Panc1 (cell line): ENCODE measurements at regions of chr11 and their contacts with region 1.

Region 1: DNA sequence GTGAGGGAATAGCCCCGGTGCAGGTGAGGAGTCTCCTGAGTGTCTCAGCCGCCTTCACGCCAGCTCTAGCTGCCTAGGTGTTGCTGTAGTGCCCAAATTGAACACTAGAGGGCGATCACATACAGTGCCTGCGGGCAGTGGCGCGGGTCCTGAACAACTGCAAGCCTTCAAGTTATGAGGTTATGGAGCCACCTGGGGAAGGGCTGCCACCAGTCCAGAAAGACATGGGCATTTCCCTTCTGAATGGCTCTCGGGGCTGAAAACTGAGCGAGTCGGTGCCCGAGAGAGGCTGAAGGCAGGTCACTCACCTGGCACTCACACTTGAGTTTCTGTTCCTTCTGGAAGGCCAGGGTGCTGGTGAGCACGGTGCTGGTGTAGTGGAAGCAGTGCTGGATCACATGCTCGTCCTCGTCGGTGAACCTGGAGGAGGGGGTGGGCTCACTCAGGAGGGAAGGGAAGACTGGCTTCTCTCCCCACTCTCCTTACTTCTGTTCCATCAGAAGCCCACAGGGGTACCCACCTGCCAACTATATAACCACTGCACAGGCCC is 88.4 kb downstream of the PDE2A start:
- DNase-seq: no peak
- ATAC-seq: peak; percentile 81
- H3K4me3 ChIP-seq: peak overlapping the region in 1 of 2 experiments; percentile 3; a peak in 1 of 4 replicates
- H3K27ac ChIP-seq: no peak overlapping the region
- H3K4me1 ChIP-seq: no peaks in the 10 kb centered on the region
- H3K27me3 ChIP-seq: peaks cover 12% of the 10 kb centered on the region
- CTCF ChIP-seq: peak; percentile 99

Region 2: DNA sequence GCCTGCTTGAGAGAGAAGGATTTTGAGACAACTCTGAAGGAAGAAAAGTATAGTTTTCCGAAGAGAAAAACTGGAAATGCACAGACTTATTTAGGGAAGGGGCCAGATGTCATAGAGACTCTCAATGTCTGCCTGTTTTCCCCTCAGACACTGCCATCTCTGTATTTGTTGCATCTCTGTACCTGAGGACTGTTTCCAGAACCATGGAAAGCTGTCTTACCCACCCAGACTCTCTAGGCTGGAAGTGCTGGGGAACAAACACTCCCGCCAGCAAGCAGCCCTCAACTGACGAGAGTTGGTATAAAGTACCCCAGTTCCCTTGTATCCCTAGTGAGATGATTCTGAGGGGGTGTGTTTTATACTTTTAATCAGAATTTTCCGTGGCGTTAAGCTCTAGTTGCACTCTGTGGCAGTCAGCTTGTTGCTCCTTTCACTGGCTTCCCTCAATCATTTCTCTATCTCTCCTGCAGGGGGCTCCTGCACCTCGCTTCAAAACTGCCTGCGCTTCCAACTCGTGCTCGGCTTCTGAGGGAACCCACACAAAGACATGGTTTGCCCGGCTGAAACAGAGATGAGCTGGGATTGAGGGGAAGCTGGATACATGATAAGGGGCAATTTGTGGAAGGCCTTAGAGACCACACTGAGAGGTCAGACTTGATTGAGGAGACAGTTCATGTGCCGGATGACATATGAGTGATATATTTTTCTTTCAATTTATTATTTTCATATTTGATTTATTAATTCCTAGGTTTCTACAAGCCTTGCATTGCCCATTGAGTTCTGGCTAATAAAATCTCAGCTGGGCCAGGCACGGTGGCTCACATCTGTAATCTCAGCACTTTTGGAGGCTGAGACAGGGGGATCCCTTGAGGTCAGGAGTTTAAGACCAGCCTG is 114.6 kb before region 1 on chr11:
- CTCF ChIA-PET with region 1: interaction called, 14 read pairs
- POLR2A ChIA-PET with region 1: interaction called, 3 read pairs
- in situ Hi-C with region 1: no loop called
- intact Hi-C with region 1: no loop called
- DNase-seq: no peak
- ATAC-seq: peak; percentile 97
- H3K4me3 ChIP-seq: peak overlapping the region in 1 of 2 experiments; percentile 21; a peak in 2 of 4 replicates
- H3K27ac ChIP-seq: no peak overlapping the region
- H3K4me1 ChIP-seq: peaks cover 7% of the 10 kb centered on the region; the same call in 1 of the 2 replicates
- H3K27me3 ChIP-seq: peaks cover 43% of the 10 kb centered on the region
- CTCF ChIP-seq: peak; percentile 98

Region 3: DNA sequence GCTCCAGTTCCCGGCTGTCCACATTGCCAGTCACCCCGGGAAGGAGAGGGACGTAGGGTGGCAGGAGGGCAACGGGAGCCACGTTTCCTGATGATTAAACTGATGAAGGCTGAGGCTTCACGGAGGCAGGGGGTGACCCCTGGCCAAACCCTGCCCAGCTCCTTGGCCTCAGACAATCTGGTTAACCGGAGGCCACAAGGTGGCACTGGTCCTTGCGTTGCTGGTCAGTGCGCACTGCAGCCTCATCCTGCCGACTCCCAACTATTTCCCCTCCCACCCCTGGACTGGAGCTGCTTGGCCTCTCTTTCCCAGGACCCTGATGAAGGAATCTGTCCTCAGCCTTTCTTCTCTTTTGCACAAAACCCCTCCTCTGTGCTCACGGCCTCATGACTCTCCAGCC is 13.1 kb after region 1 on chr11:
- CTCF ChIA-PET with region 1: interaction called, 13 read pairs
- POLR2A ChIA-PET with region 1: no interaction called
- in situ Hi-C with region 1: no loop called
- intact Hi-C with region 1: no loop called
- DNase-seq: no peak
- ATAC-seq: peak; percentile 89
- H3K4me3 ChIP-seq: no peak overlapping the region
- H3K27ac ChIP-seq: no peak overlapping the region
- H3K4me1 ChIP-seq: no peaks in the 10 kb centered on the region
- H3K27me3 ChIP-seq: no peaks in the 10 kb centered on the region
- CTCF ChIP-seq: peak; percentile 87

Region 4: DNA sequence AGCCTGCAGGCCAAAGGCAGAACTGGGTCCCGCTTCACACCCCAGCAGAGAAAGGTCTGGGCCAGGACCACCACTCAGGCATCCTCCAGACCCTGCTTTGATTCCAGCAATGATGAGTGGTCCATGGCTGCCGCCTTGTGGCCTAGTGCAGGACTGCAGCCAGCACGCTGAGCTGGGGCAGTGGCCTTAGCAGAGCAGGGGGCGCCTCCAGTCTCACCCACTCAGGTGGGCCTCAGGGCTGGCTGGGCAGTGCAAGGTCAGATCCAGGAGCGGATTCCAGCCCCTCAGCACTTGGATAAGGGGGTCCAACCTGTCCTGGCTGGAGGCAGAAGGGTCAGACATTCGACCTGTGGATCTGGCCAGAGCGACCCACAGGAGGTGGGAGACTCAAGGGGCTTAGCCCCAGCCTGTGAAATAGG is 98.0 kb after region 1 on chr11:
- CTCF ChIA-PET with region 1: interaction called, 24 read pairs
- POLR2A ChIA-PET with region 1: no interaction called
- in situ Hi-C with region 1: no loop called
- intact Hi-C with region 1: loop called (anchors 5 kb)
- DNase-seq: peak; percentile 52
- ATAC-seq: peak; percentile 73
- H3K4me3 ChIP-seq: no peak overlapping the region
- H3K27ac ChIP-seq: no peak overlapping the region
- H3K4me1 ChIP-seq: peaks cover 18% of the 10 kb centered on the region
- H3K27me3 ChIP-seq: peaks cover 6% of the 10 kb centered on the region
- CTCF ChIP-seq: peak; percentile 98